ENCODE measurements at regions of chr6 and their contacts with region 1.

Region 1: DNA sequence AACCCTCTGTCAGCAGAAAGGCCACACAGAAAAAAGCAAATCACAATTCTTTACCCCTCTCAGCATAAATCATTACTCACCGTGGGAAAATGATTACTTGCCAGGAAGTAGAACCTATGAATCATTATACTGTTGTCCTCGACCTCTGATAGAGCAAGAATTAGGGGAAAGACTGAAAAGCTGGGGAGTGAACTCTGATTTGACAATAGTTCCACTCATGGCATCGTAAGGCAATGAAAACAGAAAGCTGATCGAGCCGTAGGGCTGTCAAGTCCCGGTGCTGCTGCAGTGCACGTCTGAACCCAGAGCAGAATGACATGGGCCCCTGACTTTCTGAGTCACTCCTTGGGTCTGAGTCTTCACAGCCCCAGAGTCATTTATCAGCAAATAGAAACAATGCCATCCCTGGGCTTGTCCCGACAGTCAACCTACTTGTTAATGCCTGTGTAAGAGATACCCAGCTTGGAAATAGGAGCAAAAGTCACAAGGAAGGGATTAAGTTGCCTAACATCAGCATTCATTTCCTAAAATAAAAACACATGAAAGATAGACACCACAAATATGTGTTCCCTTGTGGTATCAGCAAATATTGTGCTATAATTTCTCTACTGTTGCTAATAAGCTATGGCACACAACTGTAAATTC is 224.8 kb upstream of the MARCKS start:
- DNase-seq: no peak
- H3K4me3 Mint-ChIP-seq: no peak overlapping the region
- H3K27ac Mint-ChIP-seq: peak overlapping the region; percentile 51
- H3K4me1 Mint-ChIP-seq: peaks cover 20% of the 10 kb centered on the region
- H3K27me3 Mint-ChIP-seq: peaks cover 9% of the 10 kb centered on the region

Region 2: DNA sequence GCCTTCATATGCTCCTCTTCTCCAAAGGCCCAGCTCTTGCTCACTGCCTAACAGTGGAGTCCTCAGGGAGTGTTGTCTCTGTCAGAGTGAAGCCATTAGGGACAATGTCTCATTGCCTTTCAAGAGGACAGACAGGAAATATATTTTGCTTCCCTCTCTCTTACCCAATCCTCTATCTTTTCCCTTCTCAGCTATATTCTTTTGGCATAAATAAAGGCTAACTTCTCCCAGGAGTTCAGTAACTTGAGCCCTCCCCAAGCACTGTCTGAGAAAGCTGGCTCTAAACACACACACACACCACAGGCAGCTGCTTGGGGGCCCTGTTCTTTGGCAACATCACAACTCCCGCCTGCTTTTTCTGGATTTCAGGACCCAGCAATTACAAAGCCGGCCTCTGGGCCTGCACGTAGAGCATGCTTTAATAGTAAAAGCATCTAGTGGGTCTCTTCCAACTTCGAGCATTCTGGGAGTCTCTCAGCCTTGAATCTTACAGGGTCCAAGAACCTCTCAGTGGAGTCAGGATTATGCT is 1343.2 kb before region 1 on chr6:
- intact Hi-C with region 1: loop called (anchors 5 kb)
- DNase-seq: no peak
- H3K4me3 Mint-ChIP-seq: no peak overlapping the region
- H3K27ac Mint-ChIP-seq: no peak overlapping the region
- H3K4me1 Mint-ChIP-seq: peaks cover 22% of the 10 kb centered on the region
- H3K27me3 Mint-ChIP-seq: peaks cover 66% of the 10 kb centered on the region

Region 3: GRCh38 chr6:113805173-113805790 is 172.9 kb after region 1 on chr6:
- intact Hi-C with region 1: loop called (anchors 5 kb)
- DNase-seq: no peak
- H3K4me3 Mint-ChIP-seq: no peak overlapping the region
- H3K27ac Mint-ChIP-seq: no peak overlapping the region
- H3K4me1 Mint-ChIP-seq: peaks cover 8% of the 10 kb centered on the region
- H3K27me3 Mint-ChIP-seq: peaks cover 4% of the 10 kb centered on the region

Region 4: GRCh38 chr6:114421219-114421618 is 788.9 kb after region 1 on chr6:
- intact Hi-C with region 1: no loop called
- DNase-seq: no peak
- H3K4me3 Mint-ChIP-seq: no peak overlapping the region
- H3K27ac Mint-ChIP-seq: no peak overlapping the region
- H3K4me1 Mint-ChIP-seq: peaks cover 3% of the 10 kb centered on the region
- H3K27me3 Mint-ChIP-seq: no peaks in the 10 kb centered on the region

Measured in activated T-helper 2 cell treated with anti-CD3 and anti-CD28 coated beads, Interferon-gamma antibody, Interleukin-2, Interleukin-4, amounts not matched to agents 10 μg/mL and 5 μg/mL and 100 μg/mL, durations not matched to agents 14 hours and 24 hours and 36 hours (primary cell).